ENCODE measurements at regions of chr1 and their contacts with region 1.

Region 1: GRCh38 chr1:151594143-151594625 is 17.7 kb upstream of the SNX27 start:
- DNase-seq: peak; percentile 61 to 89 (median 81)
- H3K4me3 ChIP-seq: peak overlapping the region in 1 of 4 donors; percentile 32
- H3K27ac ChIP-seq: no peak overlapping the region
- H3K4me1 ChIP-seq: peaks cover 0 to 9% of the 10 kb centered on the region in 2 donors
- H3K27me3 ChIP-seq: no peaks in the 10 kb centered on the region
- CTCF ChIP-seq: peak; percentile 72 to 92 (median 84)
- POLR2A ChIP-seq: no peak

Region 2: GRCh38 chr1:151611832-151612500 is 17.8 kb after region 1 on chr1 and contains the start of gene SNX27:
- intact Hi-C with region 1: no loop called
- DNase-seq: peak; percentile 93 to 97 (median 94)
- H3K4me3 ChIP-seq: peak within 1 kb of the TSS; percentile 64 to 99 (median 95)
- H3K27ac ChIP-seq: peak within 1 kb of the TSS; percentile 61 to 95 (median 89)
- H3K4me1 ChIP-seq: peaks cover 10 to 36% of the 10 kb centered on the region in 2 donors
- H3K27me3 ChIP-seq: no peaks in the 10 kb centered on the region
- CTCF ChIP-seq: no peak
- POLR2A ChIP-seq: peak; percentile 53 to 70
- total RNA-seq, gene SNX27: 20.0 to 46.7 (median 32.5) TPM

Region 3: GRCh38 chr1:151729966-151730291 is 135.7 kb after region 1 on chr1:
- intact Hi-C with region 1: loop called (anchors 5 kb)
- DNase-seq: peak in 1 of 7 donors; percentile 43
- H3K4me3 ChIP-seq: no peak overlapping the region
- H3K27ac ChIP-seq: no peak overlapping the region
- H3K4me1 ChIP-seq: no peaks in the 10 kb centered on the region
- H3K27me3 ChIP-seq: peaks cover 5% of the 10 kb centered on the region
- CTCF ChIP-seq: no peak
- POLR2A ChIP-seq: no peak

Measured in adrenal gland (tissue), 19 donors.